HepG2 (cell line): ENCODE measurements at regions of chr11 and their contacts with region 1.

Region 1: GRCh38 chr11:74988541-74989260 is at the start of gene NEU3:
- DNase-seq: peak; percentile 77
- ATAC-seq: peak; percentile 93
- H3K4me3 ChIP-seq: peak within 1 kb of the TSS; percentile 76 to 78 (median 78)
- H3K27ac ChIP-seq: peak within 1 kb of the TSS; percentile 77
- H3K4me1 ChIP-seq: peaks cover 39% of the 10 kb centered on the region
- H3K27me3 ChIP-seq: no peaks in the 10 kb centered on the region
- CTCF ChIP-seq: no peak
- EP300 ChIP-seq: no peak
- POLR2A ChIP-seq: peak; percentile 86 to 87
- RAD21 ChIP-seq: no peak
- total RNA-seq, gene NEU3: 14.5 and 15.3 TPM in 2 replicates

Region 2: DNA sequence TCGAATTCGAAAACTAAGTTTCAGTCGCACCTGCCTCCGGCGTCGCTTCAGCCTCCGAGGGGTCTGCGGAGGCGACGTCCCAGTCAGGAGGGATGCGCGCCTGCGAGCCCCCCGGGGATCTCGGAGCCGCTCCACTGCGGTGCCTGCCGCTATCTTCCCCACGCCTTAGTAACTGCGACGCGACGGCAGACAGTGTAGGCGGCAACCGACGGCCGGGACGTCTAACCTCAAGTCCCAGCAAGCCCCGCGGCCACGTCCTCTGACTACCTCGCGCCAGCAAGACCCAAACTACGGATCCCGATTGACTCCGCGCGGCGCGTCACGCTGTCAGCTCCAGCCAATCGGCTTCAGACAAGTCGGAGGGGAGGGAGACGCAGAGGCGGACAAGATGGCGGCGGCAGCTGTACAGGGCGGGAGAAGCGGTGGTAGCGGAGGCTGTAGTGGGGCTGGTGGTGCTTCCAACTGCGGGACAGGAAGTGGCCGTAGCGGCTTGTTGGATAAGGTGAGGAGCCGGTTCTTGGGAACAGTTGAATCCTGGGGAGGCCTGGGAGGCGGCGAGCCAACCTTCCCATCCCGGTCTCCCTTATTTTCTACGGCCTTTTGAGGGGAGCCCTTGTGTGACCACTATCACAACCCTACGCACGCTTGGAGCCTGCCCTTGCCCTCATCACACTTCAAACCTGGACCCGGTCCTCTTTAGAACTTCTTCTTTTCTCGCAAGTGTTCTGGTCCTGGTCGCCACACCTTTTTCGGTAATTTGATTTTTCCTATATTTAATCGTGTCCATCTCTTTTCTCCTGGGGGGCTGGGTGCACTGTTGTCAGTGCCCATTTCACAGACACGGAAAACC is 39.6 kb before region 1 on chr11 and contains the starts of genes SPCS2 and XRRA1:
- CTCF ChIA-PET with region 1: no interaction called
- POLR2A ChIA-PET with region 1: interaction called, 8 read pairs
- in situ Hi-C with region 1: no loop called
- intact Hi-C with region 1: loop called (anchors 1 kb)
- DNase-seq: peak; percentile 95
- ATAC-seq: peak; percentile 99
- H3K4me3 ChIP-seq: peak within 1 kb of the TSS; percentile 91 to 98 (median 97)
- H3K27ac ChIP-seq: peak within 1 kb of the TSS; percentile 81
- H3K4me1 ChIP-seq: peaks cover 45% of the 10 kb centered on the region
- H3K27me3 ChIP-seq: no peaks in the 10 kb centered on the region; a peak in 1 of 5 replicates
- CTCF ChIP-seq: 0 out of 2 replicates have a peak, but pooled peaks have one; percentile 8
- EP300 ChIP-seq: 0 out of 4 replicates have a peak, but pooled peaks of 1 of the 2 experiments have one; percentile 21
- POLR2A ChIP-seq: peak; percentile 80 to 89
- RAD21 ChIP-seq: no peak
- total RNA-seq, gene SPCS2: 83.4 and 87.3 TPM in 2 replicates
- total RNA-seq, gene XRRA1: 9.9 and 10.5 TPM in 2 replicates

Region 3: GRCh38 chr11:75002516-75002915 is 13.8 kb after region 1 on chr11:
- CTCF ChIA-PET with region 1: no interaction called
- POLR2A ChIA-PET with region 1: interaction called, 3 read pairs
- in situ Hi-C with region 1: no loop called
- intact Hi-C with region 1: loop called (anchors 1 kb)
- DNase-seq: no peak
- ATAC-seq: no peak
- H3K4me3 ChIP-seq: no peak overlapping the region
- H3K27ac ChIP-seq: no peak overlapping the region
- H3K4me1 ChIP-seq: no peaks in the 10 kb centered on the region
- H3K27me3 ChIP-seq: no peaks in the 10 kb centered on the region
- CTCF ChIP-seq: no peak
- EP300 ChIP-seq: no peak
- POLR2A ChIP-seq: no peak
- RAD21 ChIP-seq: no peak